Activated B cell treated with CpG ODN at 0.5 μM for 24 hours (primary cell): ENCODE measurements at regions of chr1 and their contacts with region 1.

Region 1: DNA sequence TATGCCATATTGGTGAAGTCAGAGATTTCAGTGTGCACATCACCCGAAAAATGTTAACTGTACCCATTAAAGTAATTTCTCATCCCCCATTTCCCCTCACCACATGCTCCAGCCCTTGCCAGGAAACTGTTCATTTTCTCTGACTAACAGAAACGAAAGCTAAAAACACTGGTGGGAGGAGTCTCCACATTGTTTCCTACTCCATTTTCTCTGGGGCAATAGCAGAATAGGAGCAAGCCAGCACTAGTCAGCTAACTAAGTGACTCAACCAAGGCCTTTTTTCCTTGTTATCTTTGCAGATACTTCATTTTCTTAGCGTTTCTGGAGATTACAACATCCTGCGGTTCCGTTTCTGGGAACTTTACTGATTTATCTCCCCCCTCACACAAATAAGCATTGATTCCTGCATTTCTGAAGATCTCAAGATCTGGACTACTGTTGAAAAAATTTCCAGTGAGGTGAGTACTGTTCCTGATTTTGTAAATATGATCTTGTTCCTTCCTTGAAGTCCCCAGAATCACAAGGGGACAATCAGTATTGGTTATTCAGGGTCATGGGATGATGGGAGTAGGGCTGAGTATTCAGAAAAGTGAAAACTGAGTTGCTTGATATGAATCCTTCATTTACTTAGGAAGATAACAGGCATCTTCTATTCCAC is at the start of gene IFI16:
- DNase-seq: no peak
- ATAC-seq: peak; percentile 61
- H3K4me3 Mint-ChIP-seq: peak within 1 kb of the TSS; percentile 91
- H3K27ac Mint-ChIP-seq: peak within 1 kb of the TSS; percentile 93
- H3K4me1 Mint-ChIP-seq: peaks cover 72% of the 10 kb centered on the region
- H3K27me3 Mint-ChIP-seq: no peaks in the 10 kb centered on the region
- CTCF ChIP-seq: no peak
- total RNA-seq, gene IFI16: 145 and 160 TPM in 2 replicates

Region 2: DNA sequence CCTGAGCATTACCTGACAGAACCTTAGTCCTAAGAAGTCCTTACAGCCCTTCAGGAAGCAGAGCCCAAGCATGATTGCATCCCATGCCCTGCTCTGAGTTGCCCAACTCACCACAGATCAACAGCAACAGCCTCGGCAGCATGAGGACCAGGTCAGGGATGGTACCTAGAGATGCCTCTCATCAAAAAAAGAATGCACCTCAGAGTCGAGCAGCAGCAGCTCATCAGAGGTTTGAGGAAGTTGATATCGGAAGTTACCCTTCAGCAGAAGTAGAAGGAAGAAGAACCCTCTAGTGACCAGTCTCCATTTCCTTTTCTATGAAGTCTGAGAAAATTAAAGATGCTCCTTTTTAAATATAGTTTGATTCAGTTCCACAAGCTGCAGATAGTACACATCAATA is 1189.9 kb before region 1 on chr1 and contains the start of gene FCRL1:
- CTCF ChIA-PET with region 1: no interaction called
- POLR2A ChIA-PET with region 1: no interaction called
- intact Hi-C with region 1: loop called (anchors 10 kb)
- DNase-seq: peak; percentile 33
- ATAC-seq: peak; percentile 88
- H3K4me3 Mint-ChIP-seq: no peak within 1 kb of the TSS
- H3K27ac Mint-ChIP-seq: no peak within 1 kb of the TSS
- H3K4me1 Mint-ChIP-seq: peaks cover 28% of the 10 kb centered on the region
- H3K27me3 Mint-ChIP-seq: no peaks in the 10 kb centered on the region
- CTCF ChIP-seq: no peak
- total RNA-seq, gene FCRL1: 111 and 138 TPM in 2 replicates

Region 3: GRCh38 chr1:158117854-158118704 is 891.8 kb before region 1 on chr1:
- CTCF ChIA-PET with region 1: no interaction called
- POLR2A ChIA-PET with region 1: no interaction called
- intact Hi-C with region 1: loop called (anchors 10 kb)
- DNase-seq: peak; percentile 45
- ATAC-seq: peak; percentile 60
- H3K4me3 Mint-ChIP-seq: peak overlapping the region; percentile 64
- H3K27ac Mint-ChIP-seq: no peak overlapping the region
- H3K4me1 Mint-ChIP-seq: peaks cover 27% of the 10 kb centered on the region
- H3K27me3 Mint-ChIP-seq: peaks cover 20% of the 10 kb centered on the region
- CTCF ChIP-seq: no peak

Region 4: DNA sequence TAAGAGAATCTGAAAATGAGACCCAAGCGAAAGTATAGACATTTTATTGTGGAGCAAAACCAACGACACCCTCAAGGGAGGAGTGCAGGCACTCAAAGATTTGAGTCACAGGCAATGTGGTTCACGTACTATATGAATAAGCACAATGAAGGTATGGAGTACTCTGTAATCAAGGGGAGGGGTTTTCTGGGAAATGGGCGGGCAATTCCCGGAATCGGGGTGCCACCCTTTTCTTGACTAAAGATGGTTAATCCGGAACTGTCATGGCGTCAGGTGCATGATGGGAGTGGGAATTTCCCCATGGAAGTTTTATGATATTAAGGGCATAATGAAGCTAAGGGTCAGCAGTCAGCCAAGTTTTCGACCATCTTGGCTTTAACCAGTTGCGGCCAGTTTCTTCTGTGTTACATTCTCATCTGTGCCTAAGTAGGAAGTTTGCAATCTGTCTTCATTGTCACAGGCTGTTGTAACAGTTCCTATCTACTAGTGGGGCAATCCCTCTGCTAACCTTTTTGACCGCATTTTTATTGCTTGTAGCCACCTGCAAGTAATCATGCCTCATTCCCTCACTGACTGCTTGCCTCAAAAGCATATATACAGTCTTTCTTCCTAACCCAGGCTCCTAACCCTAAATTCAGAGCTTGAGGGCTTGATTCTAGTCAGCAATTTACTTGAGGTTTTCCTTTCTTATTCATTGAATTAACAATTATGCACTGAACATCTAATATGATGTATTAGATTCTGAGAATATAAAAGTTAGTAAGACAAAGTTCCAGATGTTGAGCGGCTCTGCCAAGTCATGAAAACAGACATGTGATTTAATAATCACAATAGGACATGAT is 67.5 kb after region 1 on chr1:
- CTCF ChIA-PET with region 1: interaction called, 12 read pairs
- POLR2A ChIA-PET with region 1: interaction called, 63 read pairs
- intact Hi-C with region 1: loop called (anchors 2 kb)
- DNase-seq: peak; percentile 71
- ATAC-seq: peak; percentile 73
- H3K4me3 Mint-ChIP-seq: peak overlapping the region; percentile 89
- H3K27ac Mint-ChIP-seq: peak overlapping the region; percentile 94
- H3K4me1 Mint-ChIP-seq: peaks cover 40% of the 10 kb centered on the region
- H3K27me3 Mint-ChIP-seq: no peaks in the 10 kb centered on the region
- CTCF ChIP-seq: no peak

Region 5: GRCh38 chr1:159113596-159114433 is 104.0 kb after region 1 on chr1:
- CTCF ChIA-PET with region 1: no interaction called
- POLR2A ChIA-PET with region 1: no interaction called
- intact Hi-C with region 1: no loop called
- DNase-seq: no peak
- ATAC-seq: no peak
- H3K4me3 Mint-ChIP-seq: no peak overlapping the region
- H3K27ac Mint-ChIP-seq: no peak overlapping the region
- H3K4me1 Mint-ChIP-seq: no peaks in the 10 kb centered on the region
- H3K27me3 Mint-ChIP-seq: no peaks in the 10 kb centered on the region
- CTCF ChIP-seq: no peak